ENCODE measurements at regions of chr13 and their contacts with region 1.

Region 1: DNA sequence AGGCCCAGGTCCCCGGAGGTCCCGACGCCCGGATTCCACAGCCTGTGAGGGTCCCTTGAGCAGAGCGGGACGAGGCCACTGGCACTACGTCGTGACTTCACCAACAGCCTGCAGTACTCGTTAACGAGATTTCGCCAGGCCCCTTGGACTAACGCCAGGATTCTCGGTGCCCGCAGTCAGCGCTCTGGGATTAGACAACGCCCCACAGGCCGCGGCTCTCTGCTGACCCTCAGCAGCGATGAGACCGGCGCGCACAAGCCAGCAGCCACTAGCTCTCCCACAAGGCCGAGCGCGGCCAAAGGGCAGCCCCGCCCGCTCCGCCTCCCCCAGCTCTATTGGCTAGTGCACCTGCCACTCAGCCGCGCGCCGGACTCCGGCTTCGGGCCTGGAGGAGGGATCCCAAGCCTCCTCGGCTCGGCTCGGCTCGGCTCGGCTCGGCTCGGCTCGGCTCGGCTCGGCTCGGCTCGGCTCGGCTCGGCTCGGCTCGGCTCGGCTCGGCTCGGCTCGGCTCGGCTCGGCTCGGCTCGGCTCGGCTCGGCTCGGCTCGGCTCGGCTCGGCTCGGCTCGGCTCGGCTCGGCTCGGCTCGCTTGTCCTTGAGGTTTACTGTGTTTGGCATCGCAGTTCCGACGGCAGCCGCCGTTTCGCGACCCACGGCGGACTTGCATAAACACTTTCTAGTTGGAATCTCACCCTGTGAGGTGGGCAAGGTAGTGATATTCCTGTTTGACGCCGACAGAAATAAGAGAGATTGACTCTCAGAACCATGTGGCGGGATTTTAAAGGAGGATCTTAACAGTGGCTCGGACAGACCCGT is 231.7 kb upstream of the SERP2 start:
- DNase-seq: peak; percentile 97 to 100 (median 98)

Region 2: GRCh38 chr13:44050450-44051063 is 91.4 kb before region 1 on chr13:
- intact Hi-C with region 1: loop called (anchors 5 kb)
- DNase-seq: no peak

Region 3: DNA sequence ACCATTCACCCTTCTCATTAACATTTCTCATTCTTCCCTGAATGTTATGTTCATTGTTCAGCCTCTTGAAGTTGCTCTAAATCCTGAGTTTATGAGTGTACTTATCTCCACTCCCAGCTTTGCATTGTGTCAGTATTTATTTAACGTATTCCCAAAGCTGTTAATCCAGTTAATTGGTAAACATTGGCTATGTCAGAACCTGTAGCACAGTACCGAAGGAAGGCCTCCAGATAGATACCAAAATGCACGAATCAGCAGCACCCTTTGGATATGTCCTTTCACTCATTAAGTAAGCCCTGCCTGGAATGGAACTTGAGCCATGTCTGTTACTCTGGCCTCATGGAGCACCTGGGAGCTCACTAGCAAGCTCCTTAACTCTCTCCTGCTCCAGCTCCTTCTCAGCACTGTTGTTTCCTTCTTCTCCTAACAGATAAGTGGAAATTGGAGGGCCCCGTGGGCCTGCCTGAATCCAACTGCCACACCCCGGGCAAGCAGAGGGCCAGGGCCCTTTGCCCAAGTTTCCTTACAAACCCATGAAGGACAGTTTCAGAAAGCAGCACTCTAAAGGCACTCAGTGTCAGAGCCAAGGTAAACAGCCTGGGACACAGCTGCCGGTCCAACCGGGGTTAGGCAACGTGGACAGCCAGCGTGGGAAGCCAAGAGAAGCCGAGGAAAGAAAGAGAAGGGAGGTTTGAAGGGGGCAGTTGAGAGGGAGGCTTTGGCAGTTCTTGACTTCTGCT is 76.7 kb after region 1 on chr13:
- intact Hi-C with region 1: loop called (anchors 10 kb)
- DNase-seq: peak in 1 of 10 donors; percentile 33

Region 4: DNA sequence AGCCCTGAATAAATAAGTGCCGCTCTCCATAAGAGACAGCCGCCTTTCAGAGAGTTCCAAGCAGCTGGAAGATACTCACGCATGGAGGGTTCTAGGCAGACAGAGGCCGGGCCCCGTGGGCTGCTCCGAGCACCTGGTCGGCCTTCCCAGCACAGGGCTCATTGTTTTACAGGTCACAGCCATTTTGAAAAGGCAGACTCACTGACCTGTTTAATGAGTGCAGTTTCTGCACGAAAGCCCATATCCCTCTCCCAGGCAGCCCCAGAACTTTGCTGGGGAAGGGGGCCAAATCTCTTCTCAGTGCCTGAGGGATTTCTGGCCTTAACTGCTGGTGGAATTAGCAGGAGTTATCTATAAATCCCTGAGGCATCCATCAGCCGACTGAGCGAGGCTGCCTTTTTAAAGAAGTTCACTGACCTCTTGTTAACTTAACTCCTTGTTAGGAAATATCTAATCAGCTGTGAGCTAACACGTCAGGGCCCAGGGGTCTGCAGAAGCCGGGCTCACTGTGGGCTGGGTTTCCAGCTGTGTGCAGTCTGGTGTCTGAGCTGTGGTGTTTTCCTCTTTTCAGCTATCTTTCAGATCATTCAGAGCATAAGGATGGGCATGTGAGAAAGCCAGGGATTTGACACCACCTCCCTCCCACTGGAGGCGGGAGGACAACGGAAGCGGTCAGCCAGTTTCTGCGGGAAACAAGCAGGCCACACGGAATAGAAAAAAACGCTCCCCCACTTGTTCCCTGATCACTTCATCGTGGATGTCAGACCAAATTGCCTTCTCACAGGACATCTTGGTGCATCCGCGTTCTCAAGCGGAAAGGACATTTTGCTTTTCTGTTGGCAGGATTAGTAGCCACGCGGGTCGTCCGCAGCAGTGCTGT is 255.0 kb after region 1 on chr13:
- intact Hi-C with region 1: no loop called
- DNase-seq: peak in 1 of 10 donors; percentile 71

Measured in posterior cingulate gyrus (tissue), 11 donors.